Right ventricle myocardium inferior (tissue), 1 donor: ENCODE measurements at regions of chr1 and their contacts with region 1.

Region 1: GRCh38 chr1:44500181-44501046 is 95.4 kb downstream of the RNF220 start:
- DNase-seq: no peak
- ATAC-seq: peak; percentile 58

Region 2: GRCh38 chr1:44377925-44378784 is 122.3 kb before region 1 on chr1:
- intact Hi-C with region 1: loop called (anchors 2 kb)
- DNase-seq: no peak
- ATAC-seq: no peak

Region 3: GRCh38 chr1:44405041-44405797 is 95.2 kb before region 1 on chr1 and contains the start of gene RNF220:
- intact Hi-C with region 1: loop called (anchors 1 kb)
- DNase-seq: peak; percentile 75
- ATAC-seq: peak; percentile 80
- total RNA-seq, gene RNF220: 76.4 TPM

Region 4: DNA sequence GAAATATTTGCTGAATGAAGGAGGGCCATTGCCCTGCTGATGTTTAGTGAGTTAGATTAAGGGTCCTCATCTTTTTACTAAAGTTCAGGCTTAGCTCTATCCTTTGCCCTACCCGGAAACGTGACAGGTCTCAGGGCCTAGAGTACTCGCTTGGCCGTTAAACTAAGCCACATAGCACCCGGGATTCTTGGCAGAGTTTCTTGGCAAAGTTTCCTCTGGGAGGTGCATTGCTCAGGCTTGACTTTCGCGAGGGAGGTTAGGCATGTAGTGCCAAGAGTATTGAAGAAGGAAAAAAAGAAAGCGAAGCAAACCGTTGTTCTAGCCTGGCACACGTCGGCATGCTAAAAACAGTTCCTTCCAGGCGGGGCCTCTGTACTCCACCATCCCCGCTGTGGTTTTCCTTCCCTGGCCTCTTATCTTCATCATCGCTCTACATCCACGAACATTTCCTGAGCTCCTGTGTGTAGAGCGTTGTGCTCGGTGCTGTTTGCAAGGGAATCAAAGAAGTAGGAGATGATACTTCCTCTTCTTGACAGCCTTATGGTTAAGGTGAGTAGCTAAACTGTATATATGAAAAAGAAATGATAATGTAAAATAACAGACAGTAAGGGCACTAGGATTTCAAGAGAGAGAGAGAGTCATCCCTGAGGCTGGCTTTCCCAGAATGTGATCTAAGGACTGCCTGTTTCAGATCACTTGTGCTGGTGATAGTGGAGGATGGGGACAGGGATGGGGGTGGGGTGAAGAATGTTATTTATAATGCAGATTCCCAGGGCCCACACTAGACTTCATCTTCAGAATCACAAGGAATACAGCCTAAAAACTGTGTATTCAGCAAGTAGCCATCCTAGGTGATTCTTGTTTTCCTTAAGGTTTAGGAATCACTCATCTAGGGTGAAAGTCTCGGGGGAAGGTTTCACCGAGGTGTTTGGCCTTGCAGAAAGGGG is 76.5 kb before region 1 on chr1:
- intact Hi-C with region 1: loop called (anchors 5 kb)
- DNase-seq: no peak
- ATAC-seq: peak; percentile 92

Region 5: DNA sequence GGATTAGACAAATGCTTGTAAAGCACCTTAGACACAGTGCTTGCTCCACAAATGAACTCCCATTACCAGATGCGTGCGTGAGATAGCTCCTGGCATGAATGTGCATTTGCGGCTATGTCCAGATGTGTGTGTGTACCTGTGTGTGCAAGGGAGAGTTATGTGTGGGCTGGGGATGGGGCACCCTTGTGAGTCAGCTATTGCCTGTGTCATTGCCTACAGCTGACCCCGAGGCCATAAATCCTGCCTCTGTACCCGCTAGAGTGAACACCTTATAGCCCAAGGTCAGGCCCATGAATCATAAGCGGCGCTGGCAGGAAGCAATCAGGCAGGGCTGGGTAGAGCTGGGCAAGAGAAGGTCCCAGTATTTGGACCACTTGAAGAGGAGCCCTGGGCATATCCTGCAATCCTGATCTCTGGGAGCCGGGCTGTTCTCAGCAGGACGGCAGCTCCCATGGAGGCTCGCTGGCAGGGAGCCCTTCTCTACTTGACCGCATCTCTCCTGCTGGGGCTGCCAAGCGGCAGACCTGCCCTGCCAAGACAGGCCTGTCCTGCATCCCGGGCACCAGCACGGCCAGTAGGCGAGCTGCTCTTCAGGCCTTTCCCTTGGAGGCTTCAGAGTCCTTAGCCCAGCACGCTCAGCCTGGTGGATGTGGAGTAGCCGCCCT is 87.5 kb after region 1 on chr1:
- intact Hi-C with region 1: no loop called
- DNase-seq: no peak
- ATAC-seq: peak; percentile 52

Region 6: GRCh38 chr1:45051005-45051772 is 550.8 kb after region 1 on chr1:
- intact Hi-C with region 1: no loop called
- DNase-seq: no peak
- ATAC-seq: no peak